Mammary epithelial cell (primary cell): ENCODE measurements at regions of chr12 and their contacts with region 1.

Region 1: GRCh38 chr12:79547735-79548609 is 142.8 kb downstream of the PAWR start:
- DNase-seq: no peak
- H3K4me3 ChIP-seq: peak overlapping the region in 1 of 3 experiments; percentile 9
- H3K27ac ChIP-seq: peak overlapping the region; percentile 90
- H3K4me1 ChIP-seq: peaks cover 35% of the 10 kb centered on the region
- H3K27me3 ChIP-seq: no peaks in the 10 kb centered on the region
- CTCF ChIP-seq: peak; percentile 55 to 72

Region 2: GRCh38 chr12:79407671-79408622 is 140.0 kb before region 1 on chr12:
- CTCF ChIA-PET with region 1: interaction called, 6 read pairs
- dilution Hi-C with region 1: no loop called
- in situ Hi-C with region 1: loop called in 1 of 2 experiments (anchors 25 kb)
- intact Hi-C with region 1: loop called (anchors 1 kb)
- DNase-seq: peak; percentile 81
- H3K4me3 ChIP-seq: no peak overlapping the region
- H3K27ac ChIP-seq: peak overlapping the region; percentile 20
- H3K4me1 ChIP-seq: peaks cover 38% of the 10 kb centered on the region
- H3K27me3 ChIP-seq: no peaks in the 10 kb centered on the region
- CTCF ChIP-seq: peak; percentile 83 to 90

Region 3: GRCh38 chr12:79420146-79420618 is 127.8 kb before region 1 on chr12:
- CTCF ChIA-PET with region 1: interaction called, 9 read pairs
- dilution Hi-C with region 1: no loop called
- in situ Hi-C with region 1: loop called in 1 of 2 experiments (anchors 25 kb)
- intact Hi-C with region 1: loop called (anchors 1 kb)
- DNase-seq: peak; percentile 76
- H3K4me3 ChIP-seq: no peak overlapping the region
- H3K27ac ChIP-seq: peak overlapping the region; percentile 55
- H3K4me1 ChIP-seq: peaks cover 58% of the 10 kb centered on the region
- H3K27me3 ChIP-seq: no peaks in the 10 kb centered on the region
- CTCF ChIP-seq: peak; percentile 51 to 70

Region 4: DNA sequence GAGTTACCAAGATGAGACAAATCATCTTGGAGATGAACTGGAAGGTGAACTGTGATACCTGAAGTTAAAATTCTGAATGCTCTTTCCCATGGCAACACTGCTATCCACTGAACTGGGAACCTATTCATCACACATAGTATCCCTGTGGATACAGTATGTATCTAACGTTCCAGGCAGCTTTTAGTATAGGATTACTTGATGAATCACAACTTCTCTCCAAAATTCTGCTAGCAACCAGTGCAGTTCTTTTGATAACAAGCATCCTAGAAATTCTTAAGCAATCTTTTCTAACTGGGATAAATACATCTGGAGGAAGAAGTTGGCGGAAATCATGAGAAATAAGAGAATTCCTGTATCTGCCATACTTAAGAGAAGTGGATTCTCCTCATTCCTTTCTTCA is 76.4 kb after region 1 on chr12:
- CTCF ChIA-PET with region 1: no interaction called
- dilution Hi-C with region 1: no loop called
- in situ Hi-C with region 1: no loop called
- intact Hi-C with region 1: no loop called
- DNase-seq: no peak
- H3K4me3 ChIP-seq: no peak overlapping the region
- H3K27ac ChIP-seq: no peak overlapping the region
- H3K4me1 ChIP-seq: peaks cover 4% of the 10 kb centered on the region
- H3K27me3 ChIP-seq: no peaks in the 10 kb centered on the region
- CTCF ChIP-seq: no peak

Region 5: GRCh38 chr12:79634957-79635471 is 87.0 kb after region 1 on chr12:
- CTCF ChIA-PET with region 1: no interaction called
- dilution Hi-C with region 1: no loop called
- in situ Hi-C with region 1: no loop called
- intact Hi-C with region 1: loop called (anchors 1 kb)
- DNase-seq: peak; percentile 81
- H3K4me3 ChIP-seq: no peak overlapping the region
- H3K27ac ChIP-seq: peak overlapping the region; percentile 69
- H3K4me1 ChIP-seq: peaks cover 18% of the 10 kb centered on the region
- H3K27me3 ChIP-seq: no peaks in the 10 kb centered on the region
- CTCF ChIP-seq: no peak

Region 6: DNA sequence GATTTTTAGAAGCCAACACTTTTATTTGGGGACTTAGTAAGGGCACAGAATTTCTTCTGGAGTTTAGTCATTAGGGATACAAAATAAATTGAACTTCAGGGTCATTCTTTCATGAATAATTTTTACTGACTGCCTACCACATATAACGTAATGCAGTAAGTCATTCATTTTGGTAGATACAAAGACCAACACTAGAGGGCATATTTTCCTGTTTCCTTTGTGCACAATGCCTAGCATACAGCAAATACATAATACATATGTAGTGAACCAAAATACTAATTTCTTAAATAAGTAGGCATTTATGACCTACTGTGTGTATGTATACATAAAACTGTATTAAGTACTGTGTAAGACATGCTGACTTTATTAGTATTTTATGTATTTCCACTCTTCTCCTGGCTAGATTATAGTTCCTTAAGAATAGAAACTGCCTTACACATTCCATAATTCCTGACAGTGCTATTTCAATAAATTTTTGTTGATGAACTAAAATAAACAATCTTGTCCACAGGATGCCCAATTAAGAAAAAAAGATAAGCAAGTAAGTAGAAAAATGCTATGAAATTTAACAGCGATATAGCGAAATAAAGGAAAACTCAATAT is 339.0 kb after region 1 on chr12:
- CTCF ChIA-PET with region 1: no interaction called
- dilution Hi-C with region 1: no loop called
- in situ Hi-C with region 1: no loop called
- intact Hi-C with region 1: loop called (anchors 5 kb)
- DNase-seq: peak; percentile 41
- H3K4me3 ChIP-seq: no peak overlapping the region
- H3K27ac ChIP-seq: no peak overlapping the region
- H3K4me1 ChIP-seq: peaks cover 16% of the 10 kb centered on the region
- H3K27me3 ChIP-seq: no peaks in the 10 kb centered on the region
- CTCF ChIP-seq: peak; percentile 63 to 72